Activated CD4-positive, alpha-beta T cell treated with anti-CD3 and anti-CD28 coated beads, Interleukin-2, amount 10 ng/mL, durations not matched to agents 7 days and 5 days (primary cell): ENCODE measurements at regions of chr17 and their contacts with region 1.

Region 1: GRCh38 chr17:77105706-77106105 is 35.1 kb upstream of the SEC14L1 start:
- DNase-seq: no peak
- H3K4me3 Mint-ChIP-seq: no peak overlapping the region
- H3K27ac Mint-ChIP-seq: no peak overlapping the region
- H3K4me1 Mint-ChIP-seq: peaks cover 21% of the 10 kb centered on the region
- H3K27me3 Mint-ChIP-seq: no peaks in the 10 kb centered on the region

Region 2: DNA sequence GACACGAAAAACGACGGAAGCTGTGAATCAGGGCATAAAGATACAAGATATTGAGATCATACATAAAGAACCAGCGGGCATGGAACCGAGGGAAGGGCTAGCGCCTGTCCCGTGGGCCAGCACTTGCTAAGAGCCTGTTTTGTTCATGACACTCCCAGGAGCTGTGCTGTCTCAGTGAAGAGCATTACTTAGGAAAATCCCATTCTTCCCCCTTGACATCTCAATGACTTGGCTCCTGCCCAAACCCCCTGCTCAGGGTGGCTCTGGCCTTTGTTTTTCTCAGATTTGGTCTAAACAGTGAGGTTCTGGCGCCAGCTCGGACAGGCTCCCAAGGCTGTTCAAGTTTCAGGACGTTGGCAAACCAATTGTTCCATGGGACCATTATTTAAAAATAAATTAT is 44.0 kb before region 1 on chr17:
- CTCF ChIA-PET with region 1: no interaction called
- POLR2A ChIA-PET with region 1: no interaction called
- DNase-seq: no peak
- H3K4me3 Mint-ChIP-seq: no peak overlapping the region
- H3K27ac Mint-ChIP-seq: no peak overlapping the region
- H3K4me1 Mint-ChIP-seq: peaks cover under 1% of the 10 kb centered on the region
- H3K27me3 Mint-ChIP-seq: peaks cover 16% of the 10 kb centered on the region

Region 3: GRCh38 chr17:77120868-77121267 is 15.2 kb after region 1 on chr17:
- CTCF ChIA-PET with region 1: interaction called, 10 read pairs
- POLR2A ChIA-PET with region 1: no interaction called
- DNase-seq: no peak
- H3K4me3 Mint-ChIP-seq: no peak overlapping the region
- H3K27ac Mint-ChIP-seq: no peak overlapping the region
- H3K4me1 Mint-ChIP-seq: peaks cover 18% of the 10 kb centered on the region
- H3K27me3 Mint-ChIP-seq: no peaks in the 10 kb centered on the region